BJ (cell line): ENCODE measurements at regions of chrX and their contacts with region 1.

Region 1: DNA sequence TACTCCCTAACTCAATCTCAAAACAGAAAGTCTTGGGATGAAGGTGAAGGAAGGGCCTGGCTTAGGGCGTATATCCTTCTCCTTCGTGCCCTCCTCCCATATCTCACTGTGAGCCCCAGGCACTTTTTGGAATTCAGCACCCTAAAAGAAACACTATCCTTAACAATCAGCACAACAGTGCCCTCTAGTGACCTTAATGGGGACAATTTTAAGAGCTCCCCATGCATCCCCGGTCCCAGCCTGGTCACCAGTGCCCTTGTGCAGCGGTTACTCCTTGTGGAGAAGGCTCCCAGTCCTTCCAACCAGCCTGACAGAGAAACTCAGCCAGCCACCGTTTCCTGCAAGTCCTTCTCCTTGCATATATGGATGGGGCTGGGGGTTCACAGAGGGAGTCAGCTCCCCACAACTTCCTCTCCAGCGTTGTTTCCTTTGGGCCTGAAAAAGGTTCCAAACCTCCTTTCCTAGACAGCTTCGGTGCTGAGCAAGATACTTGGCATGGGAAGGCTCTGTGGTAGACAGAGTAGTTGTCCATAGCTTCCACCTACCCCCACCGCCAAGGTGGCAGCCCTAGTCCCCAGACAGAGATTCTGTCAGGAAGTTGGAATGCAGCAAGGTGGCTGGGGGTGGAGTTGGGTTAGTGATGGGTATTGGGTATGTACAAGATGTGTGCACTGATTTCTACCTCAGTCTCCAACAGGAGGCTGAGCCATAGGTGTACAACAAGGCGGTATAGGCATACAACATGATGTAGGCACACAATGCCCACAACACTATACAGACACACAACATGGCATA is 4.4 kb downstream of the PAK3 start:
- DNase-seq: no peak
- H3K4me3 ChIP-seq: no peak overlapping the region
- H3K27me3 ChIP-seq: no peaks in the 10 kb centered on the region
- CTCF ChIP-seq: peak; percentile 45

Region 2: DNA sequence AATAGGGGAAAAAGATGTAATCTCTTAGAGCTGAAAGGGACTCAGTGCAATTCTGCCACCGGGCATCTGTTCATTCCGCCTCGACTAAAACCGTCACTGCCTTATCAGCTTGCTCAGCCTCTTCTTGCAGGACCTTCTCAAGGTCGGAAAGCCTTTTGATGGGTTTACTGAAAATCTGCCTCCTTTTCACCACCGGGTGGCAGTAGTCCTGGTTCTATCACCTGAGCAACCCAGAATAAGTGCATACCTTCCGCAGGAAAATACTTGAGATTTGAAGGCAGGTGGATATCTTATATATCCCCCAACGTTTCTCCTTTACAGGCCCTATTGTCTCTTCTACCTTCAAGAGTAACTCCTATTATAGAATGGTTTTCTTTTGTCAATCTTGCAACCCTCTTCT is 107.8 kb before region 1 on chrX:
- CTCF ChIA-PET with region 1: interaction called, 10 read pairs
- POLR2A ChIA-PET with region 1: no interaction called
- DNase-seq: no peak
- H3K4me3 ChIP-seq: no peak overlapping the region
- H3K27me3 ChIP-seq: no peaks in the 10 kb centered on the region
- CTCF ChIP-seq: peak; percentile 48